MCF 10A (cell line): ENCODE measurements at regions of chr14 and their contacts with region 1.

Region 1: GRCh38 chr14:50082784-50083466 is 33.4 kb downstream of the VCPKMT start:
- DNase-seq: no peak
- H3K4me3 Mint-ChIP-seq: no peak overlapping the region
- H3K27ac Mint-ChIP-seq: no peak overlapping the region
- H3K4me1 Mint-ChIP-seq: peaks cover 26% of the 10 kb centered on the region
- H3K27me3 Mint-ChIP-seq: no peaks in the 10 kb centered on the region
- CTCF ChIP-seq: no peak

Region 2: GRCh38 chr14:50060871-50061663 is 21.9 kb before region 1 on chr14:
- CTCF ChIA-PET with region 1: interaction called, 6 read pairs
- POLR2A ChIA-PET with region 1: interaction called, 29 read pairs
- intact Hi-C with region 1: no loop called
- DNase-seq: peak; percentile 96
- H3K4me3 Mint-ChIP-seq: no peak overlapping the region
- H3K27ac Mint-ChIP-seq: peak overlapping the region; percentile 84
- H3K4me1 Mint-ChIP-seq: peaks cover 20% of the 10 kb centered on the region
- H3K27me3 Mint-ChIP-seq: no peaks in the 10 kb centered on the region
- CTCF ChIP-seq: no peak

Region 3: DNA sequence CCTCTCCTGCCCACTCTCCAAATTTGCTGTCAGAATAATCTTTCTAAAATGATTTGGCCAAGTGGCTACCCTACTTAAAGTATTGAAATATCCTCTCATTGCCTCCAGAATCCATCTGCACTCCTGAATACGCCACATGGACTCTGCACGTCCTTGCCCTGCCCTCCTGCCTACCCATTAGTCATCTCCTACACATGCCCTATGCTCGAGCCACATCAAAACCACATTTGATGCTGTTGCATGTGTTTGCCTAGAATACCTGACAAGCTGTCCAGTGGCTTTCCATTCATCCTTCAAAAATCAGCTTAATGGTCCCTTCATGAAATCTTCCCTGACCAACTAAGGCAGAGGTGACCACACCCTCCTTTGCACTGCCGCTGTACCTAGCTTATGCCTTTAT is 16.4 kb after region 1 on chr14:
- CTCF ChIA-PET with region 1: interaction called, 22 read pairs
- POLR2A ChIA-PET with region 1: interaction called, 10 read pairs
- intact Hi-C with region 1: no loop called
- DNase-seq: peak; percentile 47
- H3K4me3 Mint-ChIP-seq: no peak overlapping the region
- H3K27ac Mint-ChIP-seq: peak overlapping the region; percentile 33
- H3K4me1 Mint-ChIP-seq: peaks cover 11% of the 10 kb centered on the region
- H3K27me3 Mint-ChIP-seq: no peaks in the 10 kb centered on the region
- CTCF ChIP-seq: no peak

Region 4: DNA sequence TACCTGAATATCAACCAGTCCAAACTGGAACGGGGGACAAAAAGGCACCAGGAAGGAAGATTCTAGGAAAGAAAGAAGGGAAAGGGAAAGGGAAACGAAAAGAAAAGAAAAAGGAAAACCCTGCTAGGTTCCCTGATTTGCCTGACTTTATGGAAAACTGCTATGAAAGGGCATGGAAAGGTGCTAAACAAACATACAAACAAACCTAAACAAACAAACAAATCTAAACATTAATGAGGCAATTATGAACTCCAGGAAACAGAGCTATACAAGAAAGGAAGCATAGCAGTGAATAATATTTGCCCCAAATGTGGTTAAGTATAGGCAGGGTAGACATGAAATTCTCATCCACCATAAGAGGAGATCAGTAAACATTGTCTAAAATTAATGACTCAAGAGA is 45.3 kb after region 1 on chr14:
- CTCF ChIA-PET with region 1: no interaction called
- POLR2A ChIA-PET with region 1: no interaction called
- intact Hi-C with region 1: no loop called
- DNase-seq: no peak
- H3K4me3 Mint-ChIP-seq: no peak overlapping the region
- H3K27ac Mint-ChIP-seq: no peak overlapping the region
- H3K4me1 Mint-ChIP-seq: no peaks in the 10 kb centered on the region
- H3K27me3 Mint-ChIP-seq: no peaks in the 10 kb centered on the region
- CTCF ChIP-seq: no peak

Region 5: GRCh38 chr14:51828017-51828797 is 1745.3 kb after region 1 on chr14:
- CTCF ChIA-PET with region 1: no interaction called
- POLR2A ChIA-PET with region 1: no interaction called
- intact Hi-C with region 1: no loop called
- DNase-seq: peak; percentile 72
- H3K4me3 Mint-ChIP-seq: no peak overlapping the region
- H3K27ac Mint-ChIP-seq: no peak overlapping the region
- H3K4me1 Mint-ChIP-seq: peaks cover 6% of the 10 kb centered on the region
- H3K27me3 Mint-ChIP-seq: no peaks in the 10 kb centered on the region
- CTCF ChIP-seq: no peak